Ovary (tissue), 10 donors: ENCODE measurements at regions of chr7 and their contacts with region 1.

Region 1: DNA sequence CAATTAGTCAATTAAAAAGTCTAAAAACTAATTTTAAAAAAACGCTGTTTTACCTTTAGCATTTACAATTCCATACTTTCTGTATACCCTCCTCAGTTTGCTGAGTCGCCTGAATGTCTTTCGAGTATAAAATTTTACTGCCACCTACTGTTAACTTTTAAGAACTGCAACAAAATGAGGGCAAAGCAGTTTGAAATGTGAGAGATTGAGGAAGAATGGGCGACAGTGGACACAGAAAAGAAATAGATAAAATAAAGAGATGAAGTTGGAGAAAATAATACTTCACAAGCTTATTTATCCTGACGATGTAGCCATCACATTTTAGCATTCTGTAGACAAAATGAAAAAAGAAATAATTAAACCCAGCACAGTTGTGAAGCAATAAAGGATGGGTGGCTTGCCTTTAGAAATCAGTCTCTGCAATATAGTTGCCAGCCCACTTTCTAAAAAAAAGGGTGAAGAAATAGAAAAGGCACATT is 110.8 kb upstream of the PTN start:
- DNase-seq: no peak
- H3K4me3 ChIP-seq: no peak overlapping the region
- H3K27ac ChIP-seq: no peak overlapping the region
- H3K4me1 ChIP-seq: no peaks in the 10 kb centered on the region
- H3K27me3 ChIP-seq: no peaks in the 10 kb centered on the region
- CTCF ChIP-seq: peak in 2 of 3 donors; percentile 20 to 45
- EP300 ChIP-seq: no peak
- POLR2A ChIP-seq: no peak

Region 2: GRCh38 chr7:136405931-136406777 is 1048.1 kb before region 1 on chr7:
- intact Hi-C with region 1: loop called in 1 of 4 experiments (anchors 5 kb)
- DNase-seq: peak in 1 of 5 donors; percentile 30
- H3K4me3 ChIP-seq: no peak overlapping the region
- H3K27ac ChIP-seq: no peak overlapping the region
- H3K4me1 ChIP-seq: peaks cover 2% of the 10 kb centered on the region
- H3K27me3 ChIP-seq: no peaks in the 10 kb centered on the region
- CTCF ChIP-seq: peak in 2 of 3 donors; percentile 12 to 45
- EP300 ChIP-seq: no peak
- POLR2A ChIP-seq: no peak

Region 3: GRCh38 chr7:137642472-137642871 is 188.2 kb after region 1 on chr7:
- intact Hi-C with region 1: no loop called
- DNase-seq: no peak
- H3K4me3 ChIP-seq: no peak overlapping the region
- H3K27ac ChIP-seq: no peak overlapping the region
- H3K4me1 ChIP-seq: no peaks in the 10 kb centered on the region
- H3K27me3 ChIP-seq: no peaks in the 10 kb centered on the region
- CTCF ChIP-seq: no peak
- EP300 ChIP-seq: no peak
- POLR2A ChIP-seq: no peak